Tibial artery (tissue), 4 donors: ENCODE measurements at regions of chr3 and their contacts with region 1.

Region 1: GRCh38 chr3:47849699-47850563 is 47.0 kb downstream of the DHX30 start:
- DNase-seq: no peak
- H3K4me3 ChIP-seq: no peak overlapping the region
- H3K27ac ChIP-seq: no peak overlapping the region
- H3K4me1 ChIP-seq: no peaks in the 10 kb centered on the region
- H3K27me3 ChIP-seq: no peaks in the 10 kb centered on the region
- CTCF ChIP-seq: peak; percentile 26

Region 2: GRCh38 chr3:47989981-47990440 is 140.1 kb after region 1 on chr3:
- intact Hi-C with region 1: loop called (anchors 10 kb)
- DNase-seq: peak; percentile 88 to 91
- H3K4me3 ChIP-seq: no peak overlapping the region
- H3K27ac ChIP-seq: peak overlapping the region; percentile 36 to 42
- H3K4me1 ChIP-seq: peaks cover 0 to 30% (median 15%) of the 10 kb centered on the region in 4 donors
- H3K27me3 ChIP-seq: no peaks in the 10 kb centered on the region
- CTCF ChIP-seq: peak; percentile 88 to 93

Region 3: DNA sequence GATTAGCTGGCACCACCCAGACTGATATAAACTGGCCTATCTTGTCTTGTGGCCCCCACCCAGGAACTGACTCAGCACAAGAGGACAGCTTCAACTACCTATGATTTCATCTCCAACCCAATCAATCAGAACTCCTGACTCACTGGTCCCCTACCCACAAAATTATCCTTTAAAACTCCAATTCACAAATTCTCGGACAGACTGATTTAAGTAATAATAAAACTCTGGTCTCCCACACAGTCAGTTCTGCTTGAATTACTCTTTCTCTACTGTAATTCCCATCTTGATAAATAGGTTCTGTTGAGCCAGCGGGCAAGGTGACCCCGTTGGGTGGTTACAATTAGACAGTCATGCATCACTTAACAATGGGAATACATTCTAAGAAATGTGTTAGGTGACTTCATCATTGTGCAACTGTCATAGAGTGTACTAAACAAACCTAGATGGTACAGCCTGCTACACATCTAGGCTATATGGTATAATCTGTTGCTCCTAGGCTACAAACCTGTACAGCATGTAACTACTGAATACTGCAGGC is 214.4 kb after region 1 on chr3:
- intact Hi-C with region 1: no loop called
- DNase-seq: no peak
- H3K4me3 ChIP-seq: no peak overlapping the region
- H3K27ac ChIP-seq: no peak overlapping the region
- H3K4me1 ChIP-seq: peaks cover 0 to 65% (median 19%) of the 10 kb centered on the region in 4 donors
- H3K27me3 ChIP-seq: no peaks in the 10 kb centered on the region
- CTCF ChIP-seq: no peak